Activated naive CD4-positive, alpha-beta T cell treated with anti-CD3 and anti-CD28 coated beads for 36 hours (primary cell): ENCODE measurements at regions of chrX and their contacts with region 1.

Region 1: DNA sequence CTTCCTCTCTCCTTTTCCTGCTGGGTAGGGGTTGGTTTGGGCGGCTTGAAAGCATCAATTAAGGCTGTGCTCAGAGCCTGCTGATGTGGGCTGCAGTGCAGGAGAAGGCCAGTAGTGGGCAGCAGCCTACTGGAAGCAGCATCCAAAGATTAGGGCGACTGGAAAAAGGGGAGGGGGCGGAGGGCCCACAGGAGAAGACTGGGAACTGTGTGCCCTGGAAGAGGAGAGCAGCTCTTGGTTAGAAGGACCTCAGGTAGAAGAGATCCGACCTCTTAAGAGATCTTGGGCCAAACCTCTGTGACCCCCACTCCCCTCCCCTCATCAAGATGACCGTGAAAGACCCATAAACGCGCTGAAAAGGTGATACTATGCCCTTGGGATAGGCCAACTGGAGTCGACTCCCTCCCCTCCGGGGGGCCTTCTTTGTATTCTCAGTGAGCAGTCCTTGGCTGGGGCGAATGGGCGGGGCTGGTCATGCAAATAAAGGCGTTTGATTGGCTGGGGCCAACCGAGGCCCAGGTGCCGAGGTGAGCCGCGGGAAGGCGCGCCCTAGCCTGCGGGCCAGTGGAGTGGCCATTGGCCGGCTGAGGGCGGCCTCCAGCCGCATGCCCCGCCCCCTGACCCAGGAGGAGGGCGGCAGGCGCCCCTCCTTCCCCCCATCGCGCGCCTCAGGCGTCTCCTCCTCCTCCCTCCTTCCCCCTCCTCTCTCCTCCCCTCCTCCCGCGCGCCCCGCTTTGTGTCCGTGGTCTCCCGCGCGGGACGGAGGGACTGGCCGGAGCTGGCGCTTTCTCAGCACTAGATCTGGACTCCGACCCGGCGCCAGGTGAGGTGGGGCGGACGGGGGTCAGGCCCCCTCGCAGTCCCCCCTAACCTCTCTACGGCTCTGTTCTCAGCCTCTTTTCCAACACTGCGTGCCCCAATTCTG is 10.1 kb downstream of the DLG3 start:
- DNase-seq: peak; percentile 77
- H3K4me3 Mint-ChIP-seq: peak overlapping the region; percentile 76
- H3K27ac Mint-ChIP-seq: no peak overlapping the region
- H3K4me1 Mint-ChIP-seq: peaks cover 28% of the 10 kb centered on the region
- H3K27me3 Mint-ChIP-seq: no peaks in the 10 kb centered on the region

Region 2: DNA sequence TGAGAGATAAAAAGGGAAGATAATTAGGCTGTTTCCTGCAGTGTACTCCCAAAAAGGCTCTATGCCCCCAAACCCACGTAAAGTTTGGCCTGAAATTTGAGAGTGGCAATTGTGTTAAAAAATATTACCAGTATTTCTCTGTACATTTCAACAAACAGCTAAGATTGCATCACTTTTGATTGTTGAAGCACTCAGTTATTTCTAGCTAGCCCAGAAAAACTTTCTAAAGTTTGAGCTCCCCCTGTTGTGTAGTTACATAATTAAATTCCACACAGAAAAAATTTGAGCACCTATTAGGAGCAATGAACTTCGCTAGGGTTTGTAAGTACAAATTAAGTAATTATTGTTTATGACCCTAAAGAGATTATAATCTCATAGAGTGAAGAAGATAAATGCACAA is 99.4 kb after region 1 on chrX:
- CTCF ChIA-PET with region 1: interaction called, 4 read pairs
- intact Hi-C with region 1: loop called (anchors 1 kb)
- DNase-seq: no peak
- H3K4me3 Mint-ChIP-seq: no peak overlapping the region
- H3K27ac Mint-ChIP-seq: no peak overlapping the region
- H3K4me1 Mint-ChIP-seq: peaks cover 7% of the 10 kb centered on the region
- H3K27me3 Mint-ChIP-seq: no peaks in the 10 kb centered on the region

Region 3: DNA sequence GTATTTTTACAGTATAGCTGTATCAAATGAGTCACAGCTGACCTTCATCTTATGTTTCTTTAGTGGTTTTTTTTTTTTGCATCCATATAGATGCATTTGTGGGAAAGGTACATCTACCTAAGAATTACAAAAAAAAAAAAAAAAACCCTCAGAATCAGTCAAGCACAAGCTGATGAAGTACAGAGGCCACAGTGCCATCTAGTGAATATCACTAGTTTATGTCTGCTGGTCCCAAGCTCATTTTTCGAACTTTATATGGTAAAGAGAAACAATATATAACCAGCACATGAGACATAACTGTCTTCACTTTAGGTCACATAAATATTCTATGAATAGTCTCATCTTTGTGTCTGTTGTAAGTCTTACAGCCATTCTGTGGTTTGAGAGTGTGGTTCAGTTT is 210.0 kb after region 1 on chrX:
- CTCF ChIA-PET with region 1: interaction called, 17 read pairs
- intact Hi-C with region 1: loop called (anchors 1 kb)
- DNase-seq: peak; percentile 6
- H3K4me3 Mint-ChIP-seq: no peak overlapping the region
- H3K27ac Mint-ChIP-seq: no peak overlapping the region
- H3K4me1 Mint-ChIP-seq: no peaks in the 10 kb centered on the region
- H3K27me3 Mint-ChIP-seq: no peaks in the 10 kb centered on the region

Region 4: GRCh38 chrX:70960728-70961127 is 506.0 kb after region 1 on chrX:
- CTCF ChIA-PET with region 1: no interaction called
- intact Hi-C with region 1: loop called (anchors 5 kb)
- DNase-seq: no peak
- H3K4me3 Mint-ChIP-seq: no peak overlapping the region
- H3K27ac Mint-ChIP-seq: no peak overlapping the region
- H3K4me1 Mint-ChIP-seq: no peaks in the 10 kb centered on the region
- H3K27me3 Mint-ChIP-seq: peaks cover 5% of the 10 kb centered on the region